Sigmoid colon (tissue), 7 donors: ENCODE measurements at regions of chr13 and their contacts with region 1.

Region 1: GRCh38 chr13:75864718-75865117 is 228.6 kb downstream of the LMO7 start:
- DNase-seq: no peak
- H3K4me3 ChIP-seq: no peak overlapping the region
- H3K27ac ChIP-seq: no peak overlapping the region
- H3K4me1 ChIP-seq: no peaks in the 10 kb centered on the region
- H3K27me3 ChIP-seq: no peaks in the 10 kb centered on the region
- CTCF ChIP-seq: no peak
- EP300 ChIP-seq: no peak
- POLR2A ChIP-seq: no peak

Region 2: GRCh38 chr13:75691183-75691582 is 173.5 kb before region 1 on chr13:
- intact Hi-C with region 1: loop called (anchors 5 kb)
- DNase-seq: no peak
- H3K4me3 ChIP-seq: no peak overlapping the region
- H3K27ac ChIP-seq: no peak overlapping the region
- H3K4me1 ChIP-seq: no peaks in the 10 kb centered on the region
- H3K27me3 ChIP-seq: no peaks in the 10 kb centered on the region
- CTCF ChIP-seq: no peak
- EP300 ChIP-seq: no peak
- POLR2A ChIP-seq: no peak